ENCODE measurements at regions of chr2 and their contacts with region 1.

Region 1: GRCh38 chr2:200888704-200889625 is at the starts of genes NIF3L1 and PPIL3:
- DNase-seq: peak; percentile 100
- H3K4me3 ChIP-seq: peak within 1 kb of the TSS; percentile 61
- H3K27ac ChIP-seq: peak within 1 kb of the TSS; percentile 94
- H3K4me1 ChIP-seq: peaks cover 7% of the 10 kb centered on the region
- H3K27me3 ChIP-seq: no peaks in the 10 kb centered on the region
- CTCF ChIP-seq: no peak; the same call in 1 of the 2 replicates
- total RNA-seq, gene NIF3L1: 56.4 and 56.7 TPM in 2 replicates
- total RNA-seq, gene PPIL3: 37.2 and 48.3 TPM in 2 replicates

Region 2: DNA sequence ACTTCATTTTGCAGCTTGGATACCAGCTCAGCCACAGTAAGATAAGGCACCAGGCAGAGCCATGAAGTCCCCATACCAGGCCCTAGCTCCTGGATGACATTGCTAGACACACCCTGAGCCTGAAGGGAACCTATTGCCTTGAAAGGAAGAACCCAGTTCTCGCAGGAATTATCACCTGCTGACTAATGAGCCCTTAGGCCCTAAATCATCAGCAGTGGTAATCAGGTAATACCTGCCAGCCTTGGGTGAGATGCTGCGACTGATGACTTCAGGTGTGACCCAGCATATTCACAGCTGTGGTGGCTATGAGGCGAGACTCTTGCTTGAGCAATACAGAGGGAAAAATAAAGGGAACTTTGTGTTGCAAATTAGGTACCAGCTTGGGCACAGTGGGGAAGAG is 49.5 kb before region 1 on chr2:
- CTCF ChIA-PET with region 1: no interaction called
- POLR2A ChIA-PET with region 1: no interaction called
- intact Hi-C with region 1: no loop called
- DNase-seq: no peak
- H3K4me3 ChIP-seq: no peak overlapping the region
- H3K27ac ChIP-seq: no peak overlapping the region
- H3K4me1 ChIP-seq: no peaks in the 10 kb centered on the region
- H3K27me3 ChIP-seq: no peaks in the 10 kb centered on the region
- CTCF ChIP-seq: no peak

Region 3: DNA sequence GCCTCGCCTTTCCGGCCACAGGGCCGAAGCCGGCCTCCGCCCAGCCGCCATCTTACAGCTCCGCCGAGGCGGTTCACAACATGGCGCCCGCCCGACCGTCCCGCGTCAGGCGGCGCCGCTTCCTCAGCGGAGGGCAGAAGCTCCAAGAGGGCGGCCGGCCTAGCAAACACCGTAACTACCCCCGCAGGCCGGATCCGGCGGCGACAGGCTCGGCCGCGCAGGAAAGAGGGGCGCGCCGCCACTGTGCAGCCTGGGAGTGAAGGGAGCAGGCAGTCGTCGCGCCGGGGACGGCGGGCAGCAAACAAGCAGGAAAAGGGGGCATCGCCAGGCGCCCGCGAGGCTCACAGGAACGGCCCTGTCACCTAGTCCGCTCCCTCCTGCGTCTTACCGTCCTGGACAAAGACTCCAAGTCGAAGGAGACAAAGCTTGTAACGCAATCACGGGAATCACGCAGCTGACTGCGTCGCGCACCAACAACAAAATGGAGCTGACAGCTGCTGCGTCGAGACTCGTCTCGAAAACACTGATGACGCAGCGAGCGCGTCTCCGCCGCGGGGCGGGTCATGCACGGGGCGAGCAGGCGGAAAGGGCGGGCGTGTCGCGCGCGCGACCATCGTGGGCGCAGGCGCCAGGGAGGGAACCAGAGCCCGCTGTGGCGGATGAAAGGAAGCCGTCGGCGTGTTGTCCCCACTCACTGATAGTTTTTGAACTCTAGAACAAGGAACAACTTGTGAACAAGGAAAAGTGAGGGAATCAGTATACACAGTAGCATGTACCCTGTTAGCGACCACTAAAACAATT is 24.6 kb before region 1 on chr2 and contains the start of gene CLK1:
- CTCF ChIA-PET with region 1: no interaction called
- POLR2A ChIA-PET with region 1: interaction called, 10 read pairs
- intact Hi-C with region 1: no loop called
- DNase-seq: peak; percentile 97
- H3K4me3 ChIP-seq: peak within 1 kb of the TSS; percentile 70
- H3K27ac ChIP-seq: peak within 1 kb of the TSS; percentile 98
- H3K4me1 ChIP-seq: peaks cover 10% of the 10 kb centered on the region
- H3K27me3 ChIP-seq: no peaks in the 10 kb centered on the region
- CTCF ChIP-seq: no peak
- total RNA-seq, gene CLK1: 69.6 and 73.3 TPM in 2 replicates

Region 4: GRCh38 chr2:200909958-200910357 is 21.0 kb after region 1 on chr2:
- CTCF ChIA-PET with region 1: interaction called, 3 read pairs
- POLR2A ChIA-PET with region 1: interaction called, 17 read pairs
- intact Hi-C with region 1: no loop called
- DNase-seq: no peak
- H3K4me3 ChIP-seq: no peak overlapping the region
- H3K27ac ChIP-seq: no peak overlapping the region
- H3K4me1 ChIP-seq: no peaks in the 10 kb centered on the region
- H3K27me3 ChIP-seq: no peaks in the 10 kb centered on the region
- CTCF ChIP-seq: no peak

Region 5: GRCh38 chr2:201378496-201379397 is 489.8 kb after region 1 on chr2:
- CTCF ChIA-PET with region 1: no interaction called
- POLR2A ChIA-PET with region 1: no interaction called
- intact Hi-C with region 1: no loop called
- DNase-seq: no peak
- H3K4me3 ChIP-seq: no peak overlapping the region
- H3K27ac ChIP-seq: no peak overlapping the region
- H3K4me1 ChIP-seq: no peaks in the 10 kb centered on the region
- H3K27me3 ChIP-seq: no peaks in the 10 kb centered on the region
- CTCF ChIP-seq: no peak

Measured in A673 (cell line).